GM12878 (cell line): ENCODE measurements at regions of chr17 and their contacts with region 1.

Region 1: DNA sequence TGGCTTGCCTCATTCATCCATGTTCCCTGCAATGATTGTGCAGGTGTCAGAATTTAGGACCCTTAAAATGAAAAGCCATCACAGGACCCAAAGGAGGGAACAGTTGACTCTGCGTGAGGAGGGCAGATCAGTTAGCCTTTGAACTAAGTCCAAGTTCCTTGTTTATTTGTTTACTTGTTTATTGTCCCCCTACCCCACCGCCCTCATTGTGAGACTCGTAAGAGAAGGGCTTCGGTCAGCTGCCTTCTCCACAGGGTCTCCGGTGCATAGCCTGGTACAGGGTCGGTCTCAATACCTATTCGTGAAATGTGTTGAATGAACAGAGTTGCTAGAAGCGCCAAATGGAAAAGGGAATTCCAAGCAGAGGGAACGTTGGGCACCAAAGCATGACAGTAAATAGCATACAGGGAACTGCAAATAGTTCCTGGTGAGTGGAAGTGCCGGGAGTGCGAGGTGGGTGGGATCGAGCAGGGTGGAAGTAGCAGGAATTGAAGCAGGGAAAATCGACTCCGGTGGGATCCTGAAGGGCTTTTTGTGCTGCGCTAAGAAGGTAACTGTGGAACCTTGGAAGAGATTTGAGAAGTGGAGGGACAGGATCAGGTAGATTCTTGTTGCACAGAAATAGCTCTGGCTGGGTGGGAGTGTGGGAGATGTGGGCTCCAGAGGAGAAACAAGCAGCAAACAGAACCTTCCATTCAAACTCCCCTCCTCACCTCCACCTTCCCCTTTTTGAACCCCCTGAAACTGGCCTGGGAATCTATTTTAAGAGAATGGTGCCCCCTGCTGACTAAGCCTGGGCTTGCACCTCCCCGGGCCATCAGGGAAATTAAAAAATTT is 12.7 kb downstream of the SLC35B1 start:
- DNase-seq: no peak
- ATAC-seq: peak; percentile 71
- H3K4me3 ChIP-seq: no peak overlapping the region
- H3K27ac ChIP-seq: no peak overlapping the region
- H3K4me1 ChIP-seq: peaks cover 17% of the 10 kb centered on the region
- H3K27me3 ChIP-seq: no peaks in the 10 kb centered on the region
- CTCF ChIP-seq: peak; percentile 75 to 95 (median 93)
- EP300 ChIP-seq: no peak
- POLR2A ChIP-seq: no peak
- RAD21 ChIP-seq: peak; percentile 98

Region 2: GRCh38 chr17:49567871-49568694 is 127.0 kb before region 1 on chr17:
- CTCF ChIA-PET with region 1: interaction called, 483 read pairs
- POLR2A ChIA-PET with region 1: interaction called, 12 read pairs
- RAD21 ChIA-PET with region 1: interaction called, 70 read pairs
- SMC1A ChIA-PET with region 1: interaction called, 121 read pairs
- in situ Hi-C with region 1: loop called (anchors 5 kb)
- intact Hi-C with region 1: loop called (anchors 1 kb)
- DNase-seq: no peak
- ATAC-seq: peak; percentile 80
- H3K4me3 ChIP-seq: no peak overlapping the region
- H3K27ac ChIP-seq: no peak overlapping the region
- H3K4me1 ChIP-seq: peaks cover 13% of the 10 kb centered on the region
- H3K27me3 ChIP-seq: peaks cover 0 to 2% of the 10 kb centered on the region in 2 experiments; a peak in 1 of 4 replicates
- CTCF ChIP-seq: peak; percentile 94 to 97 (median 96)
- EP300 ChIP-seq: no peak
- POLR2A ChIP-seq: no peak
- RAD21 ChIP-seq: peak; percentile 92

Region 3: GRCh38 chr17:49582789-49583188 is 112.3 kb before region 1 on chr17:
- CTCF ChIA-PET with region 1: interaction called, 483 read pairs
- POLR2A ChIA-PET with region 1: no interaction called
- RAD21 ChIA-PET with region 1: interaction called, 4 read pairs
- SMC1A ChIA-PET with region 1: interaction called, 11 read pairs
- in situ Hi-C with region 1: no loop called
- intact Hi-C with region 1: no loop called
- DNase-seq: no peak
- ATAC-seq: no peak
- H3K4me3 ChIP-seq: no peak overlapping the region
- H3K27ac ChIP-seq: no peak overlapping the region
- H3K4me1 ChIP-seq: no peaks in the 10 kb centered on the region
- H3K27me3 ChIP-seq: no peaks in the 10 kb centered on the region; a peak in 1 of 4 replicates
- CTCF ChIP-seq: no peak
- EP300 ChIP-seq: no peak
- POLR2A ChIP-seq: no peak
- RAD21 ChIP-seq: no peak

Region 4: DNA sequence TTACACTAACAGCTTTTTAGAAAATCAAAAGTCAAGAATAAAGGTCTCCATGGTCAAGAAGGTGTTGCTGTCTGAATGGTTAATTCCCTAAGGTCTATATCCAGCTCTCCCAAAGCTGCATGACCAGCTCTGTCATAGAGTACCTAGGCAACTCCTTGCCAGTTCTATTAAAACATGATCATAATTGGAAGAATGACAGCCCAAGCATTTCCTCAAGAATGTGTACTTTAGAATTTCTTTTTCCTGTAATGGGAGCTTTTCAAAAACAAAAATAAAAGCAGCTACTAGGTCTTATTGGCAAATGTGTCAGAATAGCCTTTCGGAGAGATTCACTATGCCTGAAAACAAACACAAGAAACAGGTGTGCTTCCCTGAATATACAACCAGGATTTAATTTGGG is 25.1 kb before region 1 on chr17:
- CTCF ChIA-PET with region 1: interaction called, 11 read pairs
- POLR2A ChIA-PET with region 1: no interaction called
- RAD21 ChIA-PET with region 1: no interaction called
- SMC1A ChIA-PET with region 1: interaction called, 12 read pairs
- in situ Hi-C with region 1: no loop called
- intact Hi-C with region 1: no loop called
- DNase-seq: no peak
- ATAC-seq: no peak
- H3K4me3 ChIP-seq: no peak overlapping the region
- H3K27ac ChIP-seq: no peak overlapping the region
- H3K4me1 ChIP-seq: no peaks in the 10 kb centered on the region; the same call in 1 of the 2 replicates
- H3K27me3 ChIP-seq: no peaks in the 10 kb centered on the region
- CTCF ChIP-seq: no peak
- EP300 ChIP-seq: no peak
- POLR2A ChIP-seq: no peak
- RAD21 ChIP-seq: no peak

Region 5: GRCh38 chr17:49707608-49708514 is 12.8 kb after region 1 on chr17 and contains the start of gene SLC35B1:
- CTCF ChIA-PET with region 1: interaction called, 71 read pairs
- POLR2A ChIA-PET with region 1: interaction called, 3 read pairs
- RAD21 ChIA-PET with region 1: interaction called, 15 read pairs
- SMC1A ChIA-PET with region 1: interaction called, 21 read pairs
- in situ Hi-C with region 1: no loop called
- intact Hi-C with region 1: no loop called
- DNase-seq: peak; percentile 97
- ATAC-seq: peak; percentile 98
- H3K4me3 ChIP-seq: peak within 1 kb of the TSS; percentile 91
- H3K27ac ChIP-seq: peak within 1 kb of the TSS; percentile 98
- H3K4me1 ChIP-seq: 0 out of 2 replicates have a peak, but pooled peaks cover 3% of the 10 kb centered on the region
- H3K27me3 ChIP-seq: no peaks in the 10 kb centered on the region
- CTCF ChIP-seq: peak; percentile 97 to 99 (median 98); a peak in 5 of 6 replicates
- EP300 ChIP-seq: 0 out of 4 replicates have a peak, but pooled peaks of 1 of the 2 experiments have one; percentile 10
- POLR2A ChIP-seq: peak; percentile 93
- RAD21 ChIP-seq: peak; percentile 70
- polyA plus RNA-seq, gene SLC35B1: 40.0 to 44.4 TPM

Region 6: DNA sequence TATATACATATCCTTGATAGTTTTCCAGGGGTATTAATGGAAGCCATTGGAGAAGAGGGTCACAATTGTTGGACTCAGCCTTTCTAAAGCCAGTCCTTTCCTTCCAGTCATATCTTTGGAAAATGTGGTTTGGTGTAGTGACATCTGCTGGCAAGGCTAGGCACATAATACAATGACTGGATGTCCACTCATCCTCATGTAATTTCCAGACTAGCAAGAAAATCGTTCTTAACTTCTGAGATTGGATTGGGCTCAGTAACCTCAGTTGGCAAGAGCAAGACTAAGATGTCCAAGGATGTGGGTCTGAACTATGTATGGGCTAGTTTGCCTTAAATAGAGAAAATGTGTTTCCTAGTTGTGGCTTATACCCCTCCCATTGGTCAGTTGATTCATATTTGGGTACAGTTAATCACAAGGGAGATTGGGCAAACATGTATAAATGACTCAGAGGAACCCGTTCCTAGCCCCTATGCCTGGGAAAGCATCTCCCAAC is 84.7 kb after region 1 on chr17:
- CTCF ChIA-PET with region 1: interaction called, 11 read pairs
- POLR2A ChIA-PET with region 1: no interaction called
- RAD21 ChIA-PET with region 1: interaction called, 5 read pairs
- SMC1A ChIA-PET with region 1: interaction called, 6 read pairs
- in situ Hi-C with region 1: no loop called
- intact Hi-C with region 1: no loop called
- DNase-seq: no peak
- ATAC-seq: peak; percentile 82
- H3K4me3 ChIP-seq: no peak overlapping the region
- H3K27ac ChIP-seq: no peak overlapping the region
- H3K4me1 ChIP-seq: no peaks in the 10 kb centered on the region
- H3K27me3 ChIP-seq: no peaks in the 10 kb centered on the region; a peak in 1 of 4 replicates
- CTCF ChIP-seq: peak; percentile 53 to 71 (median 56); a peak in 5 of 6 replicates
- EP300 ChIP-seq: no peak
- POLR2A ChIP-seq: no peak
- RAD21 ChIP-seq: peak; percentile 63; the same call in 1 of the 2 replicates

Region 7: GRCh38 chr17:49913177-49914083 is 218.4 kb after region 1 on chr17:
- CTCF ChIA-PET with region 1: no interaction called
- POLR2A ChIA-PET with region 1: no interaction called
- RAD21 ChIA-PET with region 1: no interaction called
- SMC1A ChIA-PET with region 1: no interaction called
- in situ Hi-C with region 1: no loop called
- intact Hi-C with region 1: no loop called
- DNase-seq: no peak
- ATAC-seq: no peak
- H3K4me3 ChIP-seq: no peak overlapping the region
- H3K27ac ChIP-seq: no peak overlapping the region
- H3K4me1 ChIP-seq: no peaks in the 10 kb centered on the region
- H3K27me3 ChIP-seq: peaks cover 12 to 27% of the 10 kb centered on the region in 2 experiments
- CTCF ChIP-seq: no peak
- EP300 ChIP-seq: no peak
- POLR2A ChIP-seq: no peak
- RAD21 ChIP-seq: no peak